Activated T-helper 1 cell treated with anti-CD3 and anti-CD28 coated beads, Interleukin-12 subunit alpha, Interleukin-12 subunit beta, Interleukin-2, Interleukin-4 antibody, amounts not matched to agents 30 ng/mL and 10 ng/mL and 1 ng/mL, durations not matched to agents 14 hours and 24 hours and 36 hours (primary cell): ENCODE measurements at regions of chr9 and their contacts with region 1.

Region 1: GRCh38 chr9:126490871-126491567 is 122.7 kb upstream of the LMX1B start:
- DNase-seq: peak; percentile 43
- H3K4me3 Mint-ChIP-seq: no peak overlapping the region
- H3K27ac Mint-ChIP-seq: no peak overlapping the region
- H3K4me1 Mint-ChIP-seq: no peaks in the 10 kb centered on the region
- H3K27me3 Mint-ChIP-seq: peaks cover 10% of the 10 kb centered on the region

Region 2: GRCh38 chr9:125407974-125408900 is 1082.8 kb before region 1 on chr9:
- intact Hi-C with region 1: loop called (anchors 1 kb)
- DNase-seq: peak; percentile 53
- H3K4me3 Mint-ChIP-seq: peak overlapping the region; percentile 79
- H3K27ac Mint-ChIP-seq: no peak overlapping the region
- H3K4me1 Mint-ChIP-seq: peaks cover 7% of the 10 kb centered on the region
- H3K27me3 Mint-ChIP-seq: peaks cover 15% of the 10 kb centered on the region

Region 3: GRCh38 chr9:126146254-126147145 is 344.5 kb before region 1 on chr9:
- intact Hi-C with region 1: loop called (anchors 10 kb)
- DNase-seq: no peak
- H3K4me3 Mint-ChIP-seq: peak overlapping the region; percentile 31
- H3K27ac Mint-ChIP-seq: no peak overlapping the region
- H3K4me1 Mint-ChIP-seq: peaks cover 11% of the 10 kb centered on the region
- H3K27me3 Mint-ChIP-seq: peaks cover 15% of the 10 kb centered on the region

Region 4: GRCh38 chr9:126301985-126302603 is 188.9 kb before region 1 on chr9:
- intact Hi-C with region 1: loop called (anchors 1 kb)
- DNase-seq: peak; percentile 56
- H3K4me3 Mint-ChIP-seq: no peak overlapping the region
- H3K27ac Mint-ChIP-seq: no peak overlapping the region
- H3K4me1 Mint-ChIP-seq: peaks cover 5% of the 10 kb centered on the region
- H3K27me3 Mint-ChIP-seq: peaks cover 5% of the 10 kb centered on the region

Region 5: DNA sequence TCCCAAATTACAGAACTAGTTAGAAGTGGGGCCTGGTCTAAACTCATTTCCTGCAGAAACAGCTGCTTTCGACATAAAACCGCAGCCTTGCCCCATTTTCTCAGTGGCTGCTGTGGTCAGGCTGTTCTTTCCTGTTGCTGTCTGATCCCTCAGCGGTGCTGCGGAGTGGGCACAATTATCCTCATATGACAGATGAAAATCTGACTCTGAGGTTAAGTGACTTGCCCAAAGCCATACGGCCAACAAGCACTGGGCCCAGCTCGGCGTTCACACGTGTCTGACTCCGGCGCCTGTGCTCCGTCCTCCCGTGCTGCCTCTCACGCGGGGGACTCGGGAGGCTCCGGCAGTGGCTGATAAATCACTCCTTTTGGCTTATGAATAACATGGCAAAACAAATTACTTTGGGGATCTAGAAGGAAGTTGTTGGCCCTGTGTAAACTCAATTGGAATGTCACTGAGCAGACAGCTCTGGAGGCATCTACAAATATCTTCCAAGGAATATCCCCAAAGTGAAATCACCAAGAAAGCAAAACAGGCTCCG is 19.9 kb before region 1 on chr9:
- intact Hi-C with region 1: loop called (anchors 2 kb)
- DNase-seq: peak; percentile 81
- H3K4me3 Mint-ChIP-seq: peak overlapping the region; percentile 58
- H3K27ac Mint-ChIP-seq: peak overlapping the region; percentile 89
- H3K4me1 Mint-ChIP-seq: peaks cover 47% of the 10 kb centered on the region
- H3K27me3 Mint-ChIP-seq: peaks cover 50% of the 10 kb centered on the region

Region 6: DNA sequence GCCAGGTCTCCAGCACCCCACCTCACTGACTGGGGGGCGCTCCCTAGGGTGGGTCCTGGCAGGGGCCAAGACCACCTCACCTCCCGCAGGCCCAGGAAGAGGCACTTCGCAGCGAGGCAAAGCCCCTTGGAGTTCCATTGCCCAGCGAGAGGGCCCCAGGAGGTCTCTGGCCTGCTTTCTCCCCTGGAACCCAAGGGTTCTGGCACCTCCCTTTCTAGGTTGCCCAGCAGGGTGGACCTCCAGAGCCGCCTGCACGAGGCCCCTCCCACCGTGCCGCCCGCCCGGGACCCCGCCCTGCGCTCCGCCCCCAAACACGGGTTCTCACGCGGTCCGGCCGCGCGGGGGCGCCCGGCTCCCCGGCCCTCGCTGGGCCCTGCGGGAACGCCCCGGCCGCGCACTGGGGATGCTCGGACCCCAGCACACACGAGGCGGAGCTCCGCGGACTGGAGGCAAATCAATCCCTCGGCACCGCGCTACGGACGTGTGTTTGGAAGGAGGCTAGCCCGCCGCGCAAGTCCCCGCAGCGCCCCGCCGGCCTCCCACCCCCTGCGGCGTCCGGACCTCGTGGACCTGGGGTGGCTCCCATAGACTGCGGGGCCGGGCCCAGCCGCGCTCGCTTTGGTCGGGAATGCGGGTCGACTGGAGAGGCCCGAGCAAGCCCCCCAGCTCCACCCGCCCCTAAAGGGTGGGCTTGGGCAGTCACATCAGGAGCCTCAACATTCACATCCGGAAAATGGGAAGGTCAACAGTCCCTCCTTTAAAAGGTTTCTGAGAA is 23.2 kb after region 1 on chr9:
- intact Hi-C with region 1: no loop called
- DNase-seq: peak; percentile 42
- H3K4me3 Mint-ChIP-seq: no peak overlapping the region
- H3K27ac Mint-ChIP-seq: no peak overlapping the region
- H3K4me1 Mint-ChIP-seq: peaks cover 31% of the 10 kb centered on the region
- H3K27me3 Mint-ChIP-seq: peaks cover 67% of the 10 kb centered on the region